CD8-positive, alpha-beta memory T cell (primary cell): ENCODE measurements at regions of chr5 and their contacts with region 1.

Region 1: DNA sequence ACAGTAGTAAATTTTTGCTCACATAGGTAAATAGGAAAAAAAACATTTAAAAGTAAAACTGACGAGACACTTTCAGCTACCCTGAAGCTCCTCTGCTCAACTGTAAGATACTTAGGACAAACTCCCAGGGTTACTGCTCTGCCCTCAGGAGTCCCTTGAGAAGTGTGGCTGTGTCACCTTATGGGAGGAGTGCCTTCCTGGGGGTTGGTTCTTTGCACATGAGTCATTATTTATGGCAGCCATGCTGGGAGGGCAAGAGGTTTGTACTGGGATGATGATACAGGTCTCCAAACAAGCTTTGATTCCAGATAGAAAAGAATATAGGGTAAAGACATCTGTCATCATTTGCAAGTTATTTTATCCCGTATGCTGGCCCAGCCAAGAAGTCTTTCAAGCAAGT is 45.9 kb downstream of the TTC1 start:
- DNase-seq: no peak
- H3K4me3 ChIP-seq: no peak overlapping the region
- H3K4me3 Mint-ChIP-seq: no peak overlapping the region
- H3K27ac ChIP-seq: no peak overlapping the region
- H3K27ac Mint-ChIP-seq: peak overlapping the region in 1 of 8 donors; percentile 5
- H3K4me1 ChIP-seq: no peaks in the 10 kb centered on the region
- H3K4me1 Mint-ChIP-seq: no peaks in the 10 kb centered on the region
- H3K27me3 ChIP-seq: no peaks in the 10 kb centered on the region
- H3K27me3 Mint-ChIP-seq: no peaks in the 10 kb centered on the region

Region 2: DNA sequence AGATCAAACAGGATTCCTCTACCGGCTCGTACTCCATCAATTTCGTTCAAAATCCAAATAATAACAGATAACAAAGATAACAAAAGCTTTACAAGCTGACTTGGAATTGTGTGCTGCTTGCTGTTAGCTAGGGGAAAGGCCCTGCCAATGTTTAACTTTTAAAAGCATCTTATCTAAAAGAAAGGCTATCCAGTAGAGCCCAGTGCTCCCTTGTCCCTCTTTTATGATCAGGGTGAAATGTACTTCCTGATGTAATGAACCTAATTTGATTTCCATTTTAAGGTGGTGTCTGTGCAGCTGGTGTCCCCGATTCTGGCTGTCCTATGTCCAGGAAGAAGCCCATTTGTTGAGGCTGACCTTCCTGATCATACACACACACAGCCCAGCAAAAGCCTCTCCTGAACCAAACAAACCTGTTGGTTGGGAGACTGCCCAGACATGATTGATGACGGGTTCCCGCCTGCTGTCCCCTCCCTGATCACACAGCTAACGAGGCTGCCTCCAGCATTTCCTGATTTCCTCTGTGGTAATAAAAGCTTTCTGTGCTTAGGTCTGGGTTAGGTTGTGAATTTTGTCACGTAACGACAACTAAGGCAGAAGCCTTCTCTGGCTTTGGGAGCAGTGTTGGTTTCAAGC is 10.3 kb after region 1 on chr5:
- CTCF ChIA-PET with region 1: interaction called, 10 read pairs
- POLR2A ChIA-PET with region 1: no interaction called
- DNase-seq: no peak
- H3K4me3 ChIP-seq: no peak overlapping the region
- H3K4me3 Mint-ChIP-seq: no peak overlapping the region
- H3K27ac ChIP-seq: no peak overlapping the region
- H3K27ac Mint-ChIP-seq: peak overlapping the region in 2 of 8 donors; percentile 35 to 64
- H3K4me1 ChIP-seq: no peaks in the 10 kb centered on the region
- H3K4me1 Mint-ChIP-seq: peaks cover 0 to 4% (median 0%) of the 10 kb centered on the region in 3 donors
- H3K27me3 ChIP-seq: no peaks in the 10 kb centered on the region
- H3K27me3 Mint-ChIP-seq: no peaks in the 10 kb centered on the region